ENCODE measurements at regions of chr9 and their contacts with region 1.

Region 1: DNA sequence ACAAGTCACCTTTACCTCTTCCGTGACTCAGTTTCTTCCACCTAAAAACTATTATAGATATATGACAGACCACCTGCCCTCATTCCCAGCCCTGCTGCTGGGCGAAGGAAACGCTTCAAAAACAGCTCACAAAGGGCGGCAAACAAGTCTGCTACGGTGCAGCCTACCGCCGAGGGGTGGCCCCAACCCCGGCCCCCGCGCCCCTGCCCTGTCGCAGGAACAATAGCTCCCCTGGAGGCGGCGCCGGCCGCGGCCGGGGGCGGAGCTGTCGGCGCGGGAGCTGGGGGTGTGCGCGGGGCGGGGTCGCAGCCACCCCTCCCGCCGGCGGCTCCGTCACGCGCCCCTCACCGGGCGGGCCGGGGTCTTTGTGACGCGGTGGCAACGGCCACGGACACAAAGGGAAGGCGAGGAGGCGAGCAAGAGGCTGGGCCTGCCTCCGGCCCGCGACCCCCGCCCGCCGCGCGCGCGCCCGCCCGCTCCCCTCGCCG is at the start of gene TMEFF1:
- DNase-seq: peak; percentile 48 to 91 (median 81)

Region 2: GRCh38 chr9:100426530-100427428 is 46.1 kb before region 1 on chr9 and contains the start of gene MSANTD3:
- intact Hi-C with region 1: loop called (anchors 10 kb)
- DNase-seq: peak in 40 of 42 donors; percentile 20 to 86 (median 64)